Mammary epithelial cell (primary cell): ENCODE measurements at regions of chr4 and their contacts with region 1.

Region 1: GRCh38 chr4:145481164-145481941 is at the start of gene SMAD1:
- DNase-seq: peak; percentile 87
- H3K4me3 ChIP-seq: peak within 1 kb of the TSS; percentile 60 to 75 (median 66)
- H3K27ac ChIP-seq: peak within 1 kb of the TSS; percentile 61
- H3K4me1 ChIP-seq: peaks cover 19% of the 10 kb centered on the region
- H3K27me3 ChIP-seq: no peaks in the 10 kb centered on the region
- CTCF ChIP-seq: no peak
- total RNA-seq, gene SMAD1: 30.0 to 43.2 TPM

Region 2: DNA sequence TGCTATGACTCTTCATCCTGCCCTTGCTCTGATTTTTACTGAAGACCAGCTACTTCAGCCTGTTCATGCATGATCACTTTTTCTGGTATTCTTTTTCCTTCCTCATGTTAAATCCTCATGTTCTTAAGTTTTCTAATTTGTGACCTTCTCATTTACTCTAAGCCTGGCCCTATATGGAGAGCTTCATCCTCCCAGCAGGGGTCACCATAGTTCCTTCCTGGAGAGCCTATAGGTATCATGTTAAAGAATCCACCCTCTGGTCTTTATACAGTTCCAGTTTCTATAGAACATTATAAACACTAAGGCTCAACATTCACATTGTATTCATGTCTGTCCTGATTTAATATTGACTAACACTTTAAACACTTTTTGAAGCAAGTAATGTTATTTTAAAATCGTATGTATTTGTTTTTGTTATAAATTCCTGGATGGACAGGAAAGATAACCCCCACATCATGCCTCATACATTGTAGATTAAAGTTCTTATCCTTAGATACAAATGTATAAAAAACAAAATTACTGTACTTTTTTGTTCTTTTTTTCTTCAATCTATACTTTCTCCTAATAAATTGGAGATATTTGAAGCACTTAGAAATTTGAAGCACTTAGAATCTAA is 247.2 kb before region 1 on chr4:
- CTCF ChIA-PET with region 1: no interaction called
- dilution Hi-C with region 1: no loop called
- in situ Hi-C with region 1: no loop called
- intact Hi-C with region 1: loop called (anchors 1 kb)
- DNase-seq: peak; percentile 43
- H3K4me3 ChIP-seq: no peak overlapping the region
- H3K27ac ChIP-seq: no peak overlapping the region
- H3K4me1 ChIP-seq: no peaks in the 10 kb centered on the region
- H3K27me3 ChIP-seq: no peaks in the 10 kb centered on the region
- CTCF ChIP-seq: peak; percentile 94 to 95

Region 3: DNA sequence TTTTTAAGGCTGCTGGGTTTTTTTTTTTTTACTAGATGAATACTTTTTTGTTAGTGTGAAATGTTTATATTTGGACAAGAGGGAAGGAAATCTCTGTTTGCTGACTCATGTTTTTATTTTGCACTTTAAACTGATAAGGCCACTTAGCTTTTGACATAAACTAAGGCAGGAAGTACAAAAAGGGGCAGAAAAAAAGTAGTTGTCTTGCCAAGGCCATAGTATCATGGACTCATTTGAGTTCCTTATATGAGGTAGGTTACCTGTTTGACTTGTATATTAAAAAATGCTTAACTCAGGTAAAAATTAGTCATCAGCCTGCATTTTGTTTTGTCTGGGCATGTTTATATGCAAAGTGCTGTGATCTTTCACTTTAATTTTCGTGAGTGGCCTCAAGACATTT is 26.3 kb after region 1 on chr4:
- CTCF ChIA-PET with region 1: no interaction called
- dilution Hi-C with region 1: no loop called
- in situ Hi-C with region 1: no loop called
- intact Hi-C with region 1: loop called (anchors 2 kb)
- DNase-seq: peak; percentile 81
- H3K4me3 ChIP-seq: peak overlapping the region in 2 of 3 experiments; percentile 36 to 47
- H3K27ac ChIP-seq: peak overlapping the region; percentile 88
- H3K4me1 ChIP-seq: peaks cover 7% of the 10 kb centered on the region
- H3K27me3 ChIP-seq: no peaks in the 10 kb centered on the region
- CTCF ChIP-seq: no peak

Region 4: GRCh38 chr4:145557720-145558119 is 76.4 kb after region 1 on chr4:
- CTCF ChIA-PET with region 1: no interaction called
- dilution Hi-C with region 1: no loop called
- in situ Hi-C with region 1: no loop called
- intact Hi-C with region 1: loop called (anchors 1 kb)
- DNase-seq: peak; percentile 75
- H3K4me3 ChIP-seq: no peak overlapping the region
- H3K27ac ChIP-seq: peak overlapping the region; percentile 42
- H3K4me1 ChIP-seq: peaks cover 5% of the 10 kb centered on the region
- H3K27me3 ChIP-seq: no peaks in the 10 kb centered on the region
- CTCF ChIP-seq: peak; percentile 97 to 99

Region 5: GRCh38 chr4:145580906-145581305 is 99.6 kb after region 1 on chr4:
- CTCF ChIA-PET with region 1: no interaction called
- dilution Hi-C with region 1: no loop called
- in situ Hi-C with region 1: no loop called
- intact Hi-C with region 1: no loop called
- DNase-seq: no peak
- H3K4me3 ChIP-seq: no peak overlapping the region
- H3K27ac ChIP-seq: no peak overlapping the region
- H3K4me1 ChIP-seq: no peaks in the 10 kb centered on the region
- H3K27me3 ChIP-seq: no peaks in the 10 kb centered on the region
- CTCF ChIP-seq: no peak